GM13977 (cell line): ENCODE measurements at regions of chr6 and their contacts with region 1.

Region 1: GRCh38 chr6:82247634-82248232 is at the start of gene IBTK:
- DNase-seq: peak; percentile 91
- CTCF ChIP-seq: no peak

Region 2: DNA sequence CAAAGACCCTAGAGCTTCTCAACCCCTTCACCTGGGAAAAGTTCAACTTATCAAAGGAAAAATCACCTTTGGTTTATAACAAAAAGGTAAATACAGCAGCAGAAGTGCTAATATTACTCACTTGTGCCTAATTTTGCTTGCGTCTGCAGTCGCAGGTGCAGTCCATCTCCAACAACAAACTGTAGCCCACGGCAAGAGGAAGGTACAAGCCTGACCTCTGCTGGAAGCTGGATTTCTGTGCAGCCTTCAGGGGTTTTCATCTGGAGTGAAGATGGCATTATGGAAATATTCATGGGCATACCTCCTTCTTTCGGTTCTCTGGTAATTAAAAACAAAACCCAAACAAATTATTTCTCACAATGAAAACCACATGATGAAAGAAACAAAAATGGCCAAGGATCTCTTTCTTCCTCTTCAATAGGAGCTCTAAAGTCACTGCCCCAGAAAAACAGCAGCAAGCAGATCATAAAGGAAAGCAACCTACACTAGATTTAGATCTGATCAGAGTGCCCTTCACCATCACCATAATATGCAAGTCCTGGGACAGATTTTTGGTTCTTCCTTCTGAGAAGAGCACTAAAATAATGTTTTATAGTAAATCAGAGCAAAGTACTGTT is 810.1 kb after region 1 on chr6:
- in situ Hi-C with region 1: loop called (anchors 10 kb)
- DNase-seq: peak; percentile 22
- CTCF ChIP-seq: peak; percentile 74

Region 3: DNA sequence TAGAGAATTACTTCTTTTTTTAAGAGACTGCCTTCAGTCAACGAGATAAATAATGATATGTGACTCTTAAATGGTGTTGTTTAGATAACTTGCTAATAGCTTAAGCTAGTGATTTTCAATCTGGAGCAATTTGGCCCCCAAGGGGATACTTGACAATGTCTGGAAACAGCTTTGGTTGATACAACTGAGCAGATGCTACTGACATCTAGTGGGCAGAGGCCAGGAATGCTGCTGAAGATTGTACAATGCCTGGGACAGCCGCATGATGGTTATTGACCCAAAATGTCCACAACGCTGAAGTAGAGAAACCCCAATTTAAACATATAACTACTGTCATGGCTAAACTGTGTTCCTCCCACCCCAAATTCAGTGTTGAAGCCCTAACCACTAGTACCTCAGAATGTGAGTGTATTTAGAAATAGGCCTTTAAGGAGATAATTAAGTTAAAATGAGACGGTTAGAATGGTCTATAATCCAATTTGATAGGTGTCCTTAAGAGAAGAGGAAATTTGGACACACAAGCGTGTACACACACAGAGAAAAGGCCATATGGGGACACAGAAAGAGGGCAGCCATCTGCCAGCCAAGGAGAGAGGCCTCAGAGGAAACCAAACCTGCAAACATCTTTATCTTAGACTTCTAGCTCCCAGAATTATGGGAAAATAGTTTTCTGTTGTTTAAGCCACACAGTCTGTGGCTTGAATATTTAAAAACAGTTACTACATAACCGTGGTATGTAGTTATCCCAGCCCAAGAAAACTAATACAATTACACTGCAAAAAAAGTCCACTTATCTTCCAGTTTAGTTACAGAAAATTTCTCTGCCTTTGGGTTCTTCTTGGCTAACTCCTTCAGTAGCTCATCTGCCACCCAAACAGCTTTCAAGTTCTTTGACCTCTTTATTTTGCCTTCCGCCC is 967.7 kb after region 1 on chr6:
- in situ Hi-C with region 1: loop called (anchors 25 kb)
- DNase-seq: peak; percentile 31
- CTCF ChIP-seq: peak; percentile 81